Caco-2 (cell line): ENCODE measurements at regions of chr6 and their contacts with region 1.

Region 1: DNA sequence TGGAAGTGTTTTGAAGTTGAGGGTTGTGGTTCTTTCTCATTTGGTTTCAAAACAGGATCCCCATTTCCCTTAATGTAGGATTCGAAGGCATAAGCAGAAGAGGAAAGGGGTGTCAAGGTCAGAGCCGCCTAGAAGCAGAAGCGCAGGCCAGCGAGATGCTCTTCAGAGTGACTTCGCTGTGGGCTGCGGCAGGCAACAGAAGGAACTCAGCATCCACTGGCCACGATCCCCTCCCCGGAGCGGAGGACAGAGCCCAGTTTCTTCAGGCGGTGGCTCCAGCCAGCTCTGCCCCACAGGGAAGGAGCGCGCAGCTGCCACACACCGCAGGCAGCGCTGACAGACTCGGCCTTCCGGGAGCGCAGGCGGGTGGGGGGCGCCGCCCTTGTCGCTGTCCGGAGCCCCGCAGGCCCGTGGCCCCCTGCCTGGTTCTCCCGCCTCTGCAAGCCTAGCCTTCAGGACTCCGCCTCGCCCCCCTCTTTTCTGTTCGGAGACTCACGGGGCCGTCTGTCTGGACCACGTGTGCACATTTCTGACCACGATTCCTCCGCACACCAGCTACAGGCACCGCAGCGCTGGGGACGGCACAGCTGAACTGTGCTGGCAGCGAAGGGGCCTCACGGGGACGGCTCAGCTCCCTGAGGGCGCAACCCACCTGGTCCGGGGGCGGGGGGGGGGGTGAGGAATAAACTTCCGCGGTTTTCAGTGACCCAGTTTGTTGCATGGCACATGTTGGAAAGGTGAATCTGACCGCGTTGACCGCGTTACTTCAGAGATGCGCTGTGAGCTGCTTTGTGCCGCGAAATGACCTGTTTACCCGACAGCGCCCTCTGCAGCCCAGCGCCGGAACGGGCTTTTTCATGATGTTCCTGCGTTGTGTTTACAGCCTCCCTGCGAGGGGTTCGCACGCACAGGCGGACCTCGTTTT is 26.1 kb downstream of the TTLL2 start:
- DNase-seq: peak; percentile 87 to 91
- H3K4me3 ChIP-seq: peak overlapping the region; percentile 61
- H3K4me3 Mint-ChIP-seq: peak overlapping the region; percentile 95
- H3K27ac Mint-ChIP-seq: peak overlapping the region; percentile 96
- H3K4me1 ChIP-seq: peaks cover 27% of the 10 kb centered on the region
- H3K4me1 Mint-ChIP-seq: peaks cover 24% of the 10 kb centered on the region
- H3K27me3 ChIP-seq: no peaks in the 10 kb centered on the region
- H3K27me3 Mint-ChIP-seq: no peaks in the 10 kb centered on the region
- CTCF ChIP-seq: peak; percentile 87 to 93

Region 2: DNA sequence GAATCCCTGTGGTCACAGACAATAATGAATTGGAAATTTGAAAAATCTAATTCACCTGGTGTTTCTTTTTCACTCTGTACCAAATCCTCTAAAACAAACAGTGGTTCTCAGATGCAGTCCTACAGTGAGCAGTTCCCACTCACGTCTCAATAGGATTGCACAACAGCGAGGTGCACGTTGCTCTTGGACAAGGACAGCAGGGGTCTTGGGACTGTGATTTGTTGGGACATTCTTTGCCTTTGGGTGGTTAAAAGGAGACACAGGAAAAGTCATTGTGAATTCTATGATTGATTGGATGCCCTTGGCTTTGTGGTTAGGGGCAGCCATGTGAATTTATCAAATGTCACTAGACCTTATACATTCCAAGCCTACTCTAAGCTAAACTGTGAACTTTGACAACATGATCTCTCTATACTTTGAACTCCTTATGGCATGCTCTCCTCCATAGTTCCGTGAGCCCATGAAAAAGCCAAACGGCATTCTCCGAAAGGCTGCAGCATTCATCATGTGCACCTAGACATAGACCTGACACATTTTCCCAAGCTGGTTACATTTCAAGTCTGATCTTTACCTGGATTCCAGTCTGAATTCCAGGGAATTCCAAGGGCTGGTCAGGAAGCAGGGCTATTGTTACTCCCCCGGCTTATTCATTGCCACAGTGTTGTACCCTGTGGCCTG is 59.2 kb before region 1 on chr6:
- CTCF ChIA-PET with region 1: interaction called, 5 read pairs
- POLR2A ChIA-PET with region 1: interaction called, 3 read pairs
- intact Hi-C with region 1: loop called (anchors 2 kb)
- DNase-seq: no peak
- H3K4me3 ChIP-seq: no peak overlapping the region
- H3K4me3 Mint-ChIP-seq: no peak overlapping the region
- H3K27ac Mint-ChIP-seq: no peak overlapping the region
- H3K4me1 ChIP-seq: peaks cover 38% of the 10 kb centered on the region
- H3K4me1 Mint-ChIP-seq: peaks cover 29% of the 10 kb centered on the region
- H3K27me3 ChIP-seq: no peaks in the 10 kb centered on the region
- H3K27me3 Mint-ChIP-seq: no peaks in the 10 kb centered on the region
- CTCF ChIP-seq: no peak

Region 3: DNA sequence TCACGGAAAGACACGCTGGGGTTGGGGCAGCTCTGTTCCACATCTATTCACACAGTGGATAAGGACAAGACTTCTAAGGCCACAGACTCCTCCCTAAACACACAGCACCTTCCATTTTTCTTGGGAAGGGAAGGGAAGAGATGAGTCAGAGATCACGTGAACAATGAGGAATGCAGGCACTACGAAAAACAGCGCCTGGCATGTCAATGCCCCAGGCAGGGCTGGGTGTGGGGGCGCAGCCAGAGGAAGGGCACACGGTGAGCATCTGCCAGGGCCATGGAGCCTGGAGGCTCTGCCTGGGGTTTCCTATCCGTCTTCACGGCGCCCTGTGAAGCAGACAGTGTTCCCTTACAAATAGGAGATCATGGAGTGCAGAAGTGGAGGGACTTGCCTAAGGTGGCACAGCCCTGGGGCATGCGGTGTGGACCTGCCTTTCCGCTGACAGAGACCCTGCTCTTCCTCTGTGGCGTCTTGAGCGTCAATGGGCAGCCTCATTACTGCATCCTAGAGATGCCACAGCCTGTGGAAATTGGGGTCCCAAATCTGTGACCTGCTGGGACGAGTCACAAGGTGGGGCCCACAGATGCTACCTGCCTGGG is 44.5 kb before region 1 on chr6:
- CTCF ChIA-PET with region 1: interaction called, 4 read pairs
- POLR2A ChIA-PET with region 1: interaction called, 9 read pairs
- intact Hi-C with region 1: loop called (anchors 2 kb)
- DNase-seq: no peak
- H3K4me3 ChIP-seq: no peak overlapping the region
- H3K4me3 Mint-ChIP-seq: peak overlapping the region; percentile 16
- H3K27ac Mint-ChIP-seq: peak overlapping the region; percentile 80
- H3K4me1 ChIP-seq: peaks cover 37% of the 10 kb centered on the region
- H3K4me1 Mint-ChIP-seq: peaks cover 41% of the 10 kb centered on the region
- H3K27me3 ChIP-seq: no peaks in the 10 kb centered on the region
- H3K27me3 Mint-ChIP-seq: no peaks in the 10 kb centered on the region
- CTCF ChIP-seq: no peak

Region 4: GRCh38 chr6:167401525-167402194 is 50.7 kb after region 1 on chr6:
- CTCF ChIA-PET with region 1: no interaction called
- POLR2A ChIA-PET with region 1: no interaction called
- intact Hi-C with region 1: no loop called
- DNase-seq: peak in 1 of 2 experiments; percentile 21
- H3K4me3 ChIP-seq: no peak overlapping the region
- H3K4me3 Mint-ChIP-seq: no peak overlapping the region
- H3K27ac Mint-ChIP-seq: no peak overlapping the region
- H3K4me1 ChIP-seq: peaks cover 13% of the 10 kb centered on the region
- H3K4me1 Mint-ChIP-seq: peaks cover 10% of the 10 kb centered on the region
- H3K27me3 ChIP-seq: no peaks in the 10 kb centered on the region; the same call in 1 of the 2 replicates
- H3K27me3 Mint-ChIP-seq: no peaks in the 10 kb centered on the region
- CTCF ChIP-seq: no peak

Region 5: GRCh38 chr6:167415441-167415961 is 64.5 kb after region 1 on chr6:
- CTCF ChIA-PET with region 1: no interaction called
- POLR2A ChIA-PET with region 1: no interaction called
- intact Hi-C with region 1: no loop called
- DNase-seq: no peak
- H3K4me3 ChIP-seq: no peak overlapping the region
- H3K4me3 Mint-ChIP-seq: no peak overlapping the region
- H3K27ac Mint-ChIP-seq: no peak overlapping the region
- H3K4me1 ChIP-seq: no peaks in the 10 kb centered on the region
- H3K4me1 Mint-ChIP-seq: no peaks in the 10 kb centered on the region
- H3K27me3 ChIP-seq: no peaks in the 10 kb centered on the region; the same call in 1 of the 2 replicates
- H3K27me3 Mint-ChIP-seq: no peaks in the 10 kb centered on the region
- CTCF ChIP-seq: no peak